Activated CD4-positive, alpha-beta T cell treated with anti-CD3 and anti-CD28 coated beads, Interleukin-2, amount 10 ng/mL, durations not matched to agents 24 days and 14 days (primary cell): ENCODE measurements at regions of chr12 and their contacts with region 1.

Region 1: DNA sequence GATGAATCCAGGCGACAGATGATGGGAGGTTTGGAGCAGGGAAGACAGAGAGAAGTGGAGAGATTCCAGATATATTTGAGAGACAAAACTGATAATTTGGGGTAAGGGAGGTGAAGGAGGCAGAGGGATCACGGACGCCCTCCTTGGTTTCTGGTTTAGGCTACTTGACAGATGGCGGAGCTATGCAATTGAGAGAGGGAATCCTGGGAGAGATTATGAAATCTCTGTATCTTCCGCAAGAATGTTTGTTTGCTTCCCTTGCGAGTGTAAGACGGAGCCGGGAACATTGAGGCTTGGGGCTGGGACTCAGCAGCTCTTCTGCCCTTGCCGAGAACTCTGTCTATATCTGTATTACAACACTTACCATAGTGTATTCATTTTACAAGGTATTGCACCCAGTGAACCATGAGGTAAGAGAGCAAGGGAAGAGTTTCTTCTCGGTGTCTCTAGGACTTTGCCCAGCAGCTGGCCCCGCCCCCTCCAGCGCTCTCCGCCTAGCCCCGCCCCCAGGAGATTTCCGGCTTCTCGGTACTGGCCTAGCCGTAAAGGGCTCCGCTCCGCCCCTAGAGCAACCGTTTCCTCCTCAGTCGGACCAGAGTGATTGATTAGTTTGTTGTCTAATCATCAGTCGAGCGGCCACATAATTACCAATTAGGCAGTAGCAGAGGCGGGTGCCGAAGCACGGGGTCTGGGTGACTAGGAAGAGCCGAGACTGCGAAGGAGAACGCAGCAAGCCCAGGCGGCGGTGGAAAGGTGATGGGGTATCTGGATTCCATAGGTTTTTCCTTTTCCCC is at the start of gene PRR13:
- DNase-seq: peak; percentile 99
- H3K4me3 Mint-ChIP-seq: peak within 1 kb of the TSS; percentile 97
- H3K27ac Mint-ChIP-seq: peak within 1 kb of the TSS; percentile 96
- H3K4me1 Mint-ChIP-seq: peaks cover 30% of the 10 kb centered on the region
- H3K27me3 Mint-ChIP-seq: no peaks in the 10 kb centered on the region
- total RNA-seq, gene PRR13: 201 and 211 TPM in 2 replicates

Region 2: GRCh38 chr12:53419761-53420160 is 21.5 kb before region 1 on chr12:
- intact Hi-C with region 1: loop called (anchors 2 kb)
- DNase-seq: no peak
- H3K4me3 Mint-ChIP-seq: no peak overlapping the region
- H3K27ac Mint-ChIP-seq: no peak overlapping the region
- H3K4me1 Mint-ChIP-seq: peaks cover 35% of the 10 kb centered on the region
- H3K27me3 Mint-ChIP-seq: no peaks in the 10 kb centered on the region

Region 3: DNA sequence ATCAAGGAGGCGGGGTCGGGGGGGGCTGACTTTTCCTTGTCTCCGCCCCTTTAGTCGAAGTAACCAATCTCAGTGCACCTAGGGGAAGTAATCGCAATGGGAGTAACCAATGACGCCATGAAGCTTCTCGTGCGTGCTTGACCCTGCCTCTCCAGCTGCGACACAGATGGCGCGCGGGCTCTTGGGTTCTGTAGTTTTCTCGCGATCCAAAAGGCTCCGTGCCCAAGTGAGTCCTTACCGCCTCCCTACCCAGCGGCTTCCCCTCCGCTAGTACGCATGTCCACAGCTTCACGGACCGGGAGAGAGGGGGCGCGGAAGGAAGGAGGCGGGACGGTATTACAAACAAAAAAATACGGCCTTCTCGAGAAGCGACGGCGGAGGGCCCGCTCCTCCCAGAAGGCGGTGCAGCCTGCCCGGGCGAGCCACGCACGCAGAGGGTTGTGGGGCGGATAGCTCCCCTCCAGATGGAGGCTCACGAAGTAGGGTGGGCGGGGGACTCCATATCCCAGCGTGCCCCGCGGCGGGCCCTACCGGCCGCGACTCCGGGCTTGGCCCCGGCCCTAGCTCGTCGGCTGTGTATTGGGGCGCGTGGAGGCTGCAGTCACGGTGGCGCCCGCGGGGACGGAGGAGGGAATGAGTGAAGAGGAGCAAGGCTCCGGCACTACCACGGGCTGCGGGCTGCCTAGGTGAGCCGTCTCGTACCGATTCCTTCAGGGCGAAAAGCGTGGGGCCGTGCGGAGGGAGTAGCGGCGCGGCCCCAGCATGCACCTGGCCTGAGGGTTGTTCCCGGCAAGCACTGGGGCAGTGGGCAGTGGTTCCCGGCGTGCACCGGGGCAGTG is 59.8 kb after region 1 on chr12 and contains the start of gene TARBP2:
- intact Hi-C with region 1: loop called (anchors 1 kb)
- DNase-seq: peak; percentile 98
- H3K4me3 Mint-ChIP-seq: peak within 1 kb of the TSS; percentile 93
- H3K27ac Mint-ChIP-seq: peak within 1 kb of the TSS; percentile 97
- H3K4me1 Mint-ChIP-seq: peaks cover 35% of the 10 kb centered on the region
- H3K27me3 Mint-ChIP-seq: no peaks in the 10 kb centered on the region
- total RNA-seq, gene TARBP2: 49.7 and 52.2 TPM in 2 replicates